Sciatic nerve (tissue), 2 donors: ENCODE measurements at regions of chr1 and their contacts with region 1.

Region 1: GRCh38 chr1:213457097-213457680 is 406.1 kb downstream of the RPS6KC1 start:
- DNase-seq: peak; percentile 62
- ATAC-seq: peak; percentile 88

Region 2: GRCh38 chr1:213419369-213420030 is 37.7 kb before region 1 on chr1:
- intact Hi-C with region 1: loop called (anchors 2 kb)
- DNase-seq: no peak
- ATAC-seq: no peak